Natural killer cell (primary cell): ENCODE measurements at regions of chr19 and their contacts with region 1.

Region 1: GRCh38 chr19:57599761-57600383 is at the start of gene ZNF530:
- DNase-seq: peak; percentile 78 to 91
- ATAC-seq: peak; percentile 88 to 99 (median 97)
- H3K4me3 ChIP-seq: peak within 1 kb of the TSS; percentile 63
- H3K4me3 Mint-ChIP-seq: peak within 1 kb of the TSS; percentile 84
- H3K27ac ChIP-seq: peak within 1 kb of the TSS; percentile 24
- H3K27ac Mint-ChIP-seq: peak within 1 kb of the TSS; percentile 74 to 78
- H3K4me1 ChIP-seq: peaks cover 15% of the 10 kb centered on the region
- H3K4me1 Mint-ChIP-seq: peaks cover 22 to 23% of the 10 kb centered on the region in 2 donors
- H3K27me3 ChIP-seq: peaks cover 3% of the 10 kb centered on the region
- H3K27me3 Mint-ChIP-seq: peaks cover 3 to 8% of the 10 kb centered on the region in 2 donors
- CTCF ChIP-seq: no peak
- total RNA-seq, gene ZNF530: 5.1 to 8.0 (median 5.6) TPM

Region 2: GRCh38 chr19:57566396-57567265 is 33.2 kb before region 1 on chr19:
- intact Hi-C with region 1: no loop called
- DNase-seq: peak in 1 of 2 donors; percentile 21
- ATAC-seq: no peak
- H3K4me3 ChIP-seq: no peak overlapping the region
- H3K4me3 Mint-ChIP-seq: no peak overlapping the region
- H3K27ac ChIP-seq: no peak overlapping the region
- H3K27ac Mint-ChIP-seq: no peak overlapping the region
- H3K4me1 ChIP-seq: no peaks in the 10 kb centered on the region
- H3K4me1 Mint-ChIP-seq: no peaks in the 10 kb centered on the region
- H3K27me3 ChIP-seq: no peaks in the 10 kb centered on the region
- H3K27me3 Mint-ChIP-seq: peaks cover 0 to 5% of the 10 kb centered on the region in 2 donors
- CTCF ChIP-seq: no peak

Region 3: GRCh38 chr19:57583521-57584416 is 16.1 kb before region 1 on chr19 and contains the start of gene ZIK1:
- intact Hi-C with region 1: loop called (anchors 1 kb)
- DNase-seq: peak; percentile 79 to 95
- ATAC-seq: peak; percentile 90 to 94 (median 91)
- H3K4me3 ChIP-seq: peak within 1 kb of the TSS; percentile 68
- H3K4me3 Mint-ChIP-seq: peak within 1 kb of the TSS; percentile 92
- H3K27ac ChIP-seq: peak within 1 kb of the TSS; percentile 75
- H3K27ac Mint-ChIP-seq: peak within 1 kb of the TSS; percentile 72 to 88
- H3K4me1 ChIP-seq: peaks cover 17% of the 10 kb centered on the region
- H3K4me1 Mint-ChIP-seq: peaks cover 16 to 27% of the 10 kb centered on the region in 2 donors
- H3K27me3 ChIP-seq: no peaks in the 10 kb centered on the region
- H3K27me3 Mint-ChIP-seq: no peaks in the 10 kb centered on the region
- CTCF ChIP-seq: no peak
- total RNA-seq, gene ZIK1: 2.7 to 8.2 (median 6.5) TPM

Region 4: DNA sequence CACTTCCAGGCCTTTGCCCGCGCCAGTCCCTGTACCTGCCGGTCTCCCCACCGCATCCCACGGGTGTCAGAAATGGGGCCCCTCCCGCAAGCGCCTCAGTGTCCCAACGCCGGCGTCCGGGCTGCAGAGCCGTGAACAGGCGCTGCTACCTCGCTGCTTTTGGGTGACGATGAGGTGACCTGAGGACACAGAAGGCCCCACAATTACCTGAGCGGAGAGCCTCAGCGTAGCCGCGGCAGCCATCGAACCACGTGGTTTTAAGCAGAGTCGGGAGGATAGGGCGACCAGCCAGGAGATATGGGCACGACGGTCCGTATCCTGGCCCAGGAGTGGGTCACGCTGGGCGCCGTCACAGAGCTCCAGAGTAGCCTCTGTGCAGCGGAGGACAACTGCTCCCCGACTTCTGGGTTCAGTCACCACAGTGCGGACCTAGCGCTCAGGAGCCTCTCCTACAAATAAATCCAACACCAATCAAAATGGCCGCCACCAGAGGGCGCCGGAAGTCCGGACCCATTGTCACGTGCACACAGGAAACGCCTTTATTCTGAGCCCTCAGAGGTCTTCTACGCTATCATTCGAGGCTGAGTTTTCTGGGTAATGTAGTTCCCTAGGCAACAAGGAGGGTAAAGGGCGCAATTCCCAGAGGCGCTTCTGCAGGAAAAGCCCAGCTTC is 288.8 kb after region 1 on chr19 and contains the start of gene ZNF814:
- intact Hi-C with region 1: no loop called
- DNase-seq: peak; percentile 82 to 84
- ATAC-seq: peak; percentile 93 to 97 (median 94)
- H3K4me3 ChIP-seq: peak within 1 kb of the TSS; percentile 84
- H3K4me3 Mint-ChIP-seq: peak within 1 kb of the TSS; percentile 95
- H3K27ac ChIP-seq: peak within 1 kb of the TSS; percentile 75
- H3K27ac Mint-ChIP-seq: peak within 1 kb of the TSS; percentile 89 to 91
- H3K4me1 ChIP-seq: peaks cover 21% of the 10 kb centered on the region
- H3K4me1 Mint-ChIP-seq: peaks cover 22 to 28% of the 10 kb centered on the region in 2 donors
- H3K27me3 ChIP-seq: no peaks in the 10 kb centered on the region
- H3K27me3 Mint-ChIP-seq: no peaks in the 10 kb centered on the region
- CTCF ChIP-seq: no peak
- total RNA-seq, gene ZNF814: 25.2 to 51.2 (median 38.3) TPM